IMR-90 (cell line): ENCODE measurements at regions of chr14 and their contacts with region 1.

Region 1: GRCh38 chr14:67166450-67166853 is 22.8 kb upstream of the GARIN2 start:
- DNase-seq: peak; percentile 58
- ATAC-seq: peak; percentile 66
- H3K4me3 ChIP-seq: no peak overlapping the region
- H3K27ac ChIP-seq: no peak overlapping the region
- H3K4me1 ChIP-seq: peaks cover 4% of the 10 kb centered on the region
- H3K27me3 ChIP-seq: no peaks in the 10 kb centered on the region
- CTCF ChIP-seq: peak; percentile 92
- POLR2A ChIP-seq: no peak
- RAD21 ChIP-seq: peak; percentile 93

Region 2: GRCh38 chr14:66790101-66790500 is 376.4 kb before region 1 on chr14:
- CTCF ChIA-PET with region 1: no interaction called
- POLR2A ChIA-PET with region 1: no interaction called
- dilution Hi-C with region 1: no loop called
- in situ Hi-C with region 1: no loop called
- intact Hi-C with region 1: no loop called
- DNase-seq: no peak
- ATAC-seq: no peak
- H3K4me3 ChIP-seq: no peak overlapping the region
- H3K27ac ChIP-seq: no peak overlapping the region
- H3K4me1 ChIP-seq: no peaks in the 10 kb centered on the region
- H3K27me3 ChIP-seq: no peaks in the 10 kb centered on the region
- CTCF ChIP-seq: no peak
- POLR2A ChIP-seq: no peak
- RAD21 ChIP-seq: no peak

Region 3: DNA sequence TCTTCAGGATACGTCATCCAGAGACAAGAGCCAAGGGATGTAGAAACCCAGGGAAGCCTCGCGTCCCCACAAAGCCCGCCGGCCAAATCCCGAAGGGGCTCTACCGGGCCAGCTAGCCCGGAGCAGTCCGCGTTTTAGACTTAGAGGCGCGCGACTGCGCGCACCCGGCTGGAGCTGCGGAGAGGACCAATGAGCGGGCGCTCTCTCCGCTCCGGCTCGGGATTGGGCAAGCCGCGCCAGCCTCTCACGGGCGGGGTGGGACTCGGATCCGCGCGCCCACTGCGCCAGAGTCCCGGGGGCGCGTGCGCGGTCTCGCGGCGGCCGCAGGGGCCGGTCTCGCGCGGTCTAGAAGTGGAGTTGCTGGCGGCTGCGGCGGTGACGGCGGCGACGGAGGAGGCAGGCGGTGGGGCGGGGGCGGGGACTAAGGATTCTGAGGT is 74.5 kb after region 1 on chr14:
- CTCF ChIA-PET with region 1: no interaction called
- POLR2A ChIA-PET with region 1: no interaction called
- dilution Hi-C with region 1: no loop called
- in situ Hi-C with region 1: no loop called
- intact Hi-C with region 1: loop called (anchors 2 kb)
- DNase-seq: peak; percentile 96
- ATAC-seq: peak; percentile 95
- H3K4me3 ChIP-seq: peak overlapping the region; percentile 83
- H3K27ac ChIP-seq: peak overlapping the region; percentile 81; the same call in 1 of the 2 replicates
- H3K4me1 ChIP-seq: peaks cover 4% of the 10 kb centered on the region
- H3K27me3 ChIP-seq: no peaks in the 10 kb centered on the region
- CTCF ChIP-seq: no peak
- POLR2A ChIP-seq: no peak; the same call in 1 of the 2 replicates
- RAD21 ChIP-seq: no peak

Region 4: GRCh38 chr14:67276131-67276530 is 109.7 kb after region 1 on chr14:
- CTCF ChIA-PET with region 1: interaction called, 3 read pairs
- POLR2A ChIA-PET with region 1: no interaction called
- dilution Hi-C with region 1: no loop called
- in situ Hi-C with region 1: loop called (anchors 5 kb)
- intact Hi-C with region 1: no loop called
- DNase-seq: no peak
- ATAC-seq: no peak
- H3K4me3 ChIP-seq: no peak overlapping the region
- H3K27ac ChIP-seq: no peak overlapping the region
- H3K4me1 ChIP-seq: no peaks in the 10 kb centered on the region
- H3K27me3 ChIP-seq: no peaks in the 10 kb centered on the region
- CTCF ChIP-seq: no peak
- POLR2A ChIP-seq: no peak
- RAD21 ChIP-seq: no peak

Region 5: DNA sequence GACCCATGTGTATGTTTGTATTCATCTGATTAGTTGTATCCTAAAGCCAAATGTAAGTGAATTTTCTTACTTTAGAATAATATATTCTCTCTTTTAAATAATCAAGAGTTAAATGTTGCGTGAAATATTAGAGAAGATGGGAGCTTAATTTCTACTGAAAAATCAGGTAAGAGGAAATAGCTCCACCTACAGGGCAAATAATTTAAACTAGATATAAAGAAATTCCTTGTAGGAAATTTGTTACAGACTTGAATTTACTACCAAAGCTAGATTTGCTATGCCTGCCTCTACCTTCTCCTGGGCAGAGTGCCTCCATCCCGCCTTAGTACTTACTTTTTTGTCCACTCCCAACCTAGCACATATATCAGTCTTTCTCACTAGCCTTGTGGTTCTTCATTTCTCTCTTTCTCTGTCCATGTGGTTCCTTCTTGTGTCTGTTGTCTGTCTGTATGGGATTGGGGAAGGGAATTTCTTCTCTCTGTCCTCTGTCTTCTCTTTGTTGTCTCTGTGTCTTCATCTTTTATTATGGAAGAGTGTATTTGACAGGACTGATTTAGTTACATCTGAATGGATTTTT is 119.5 kb after region 1 on chr14:
- CTCF ChIA-PET with region 1: interaction called, 14 read pairs
- POLR2A ChIA-PET with region 1: no interaction called
- dilution Hi-C with region 1: no loop called
- in situ Hi-C with region 1: no loop called
- intact Hi-C with region 1: loop called (anchors 1 kb)
- DNase-seq: peak; percentile 64
- ATAC-seq: peak; percentile 24; the same call in 1 of the 2 replicates
- H3K4me3 ChIP-seq: no peak overlapping the region
- H3K27ac ChIP-seq: no peak overlapping the region
- H3K4me1 ChIP-seq: no peaks in the 10 kb centered on the region
- H3K27me3 ChIP-seq: no peaks in the 10 kb centered on the region
- CTCF ChIP-seq: peak; percentile 69
- POLR2A ChIP-seq: no peak
- RAD21 ChIP-seq: peak; percentile 65

Region 6: DNA sequence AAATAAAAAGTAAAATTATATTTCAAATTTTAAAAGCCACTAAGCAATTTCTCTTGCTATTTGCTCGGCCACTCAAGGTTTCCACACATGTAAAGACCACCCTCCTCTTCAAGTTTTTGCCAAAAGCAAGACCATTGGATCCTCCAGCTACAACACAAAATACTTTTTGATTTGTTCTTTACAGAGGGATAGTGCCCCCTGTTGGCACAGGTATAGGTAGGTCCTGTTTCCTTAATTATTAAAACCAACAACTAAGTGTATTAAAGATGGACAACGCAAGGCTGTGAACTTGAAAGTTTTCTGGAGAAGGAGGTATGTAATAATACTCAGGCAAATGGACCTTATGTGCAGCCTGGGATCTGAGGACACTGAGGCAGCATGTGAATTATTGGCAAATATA is 169.3 kb after region 1 on chr14:
- CTCF ChIA-PET with region 1: no interaction called
- POLR2A ChIA-PET with region 1: no interaction called
- dilution Hi-C with region 1: no loop called
- in situ Hi-C with region 1: no loop called
- intact Hi-C with region 1: loop called (anchors 5 kb)
- DNase-seq: peak; percentile 27
- ATAC-seq: no peak
- H3K4me3 ChIP-seq: no peak overlapping the region
- H3K27ac ChIP-seq: no peak overlapping the region
- H3K4me1 ChIP-seq: peaks cover 5% of the 10 kb centered on the region; the same call in 1 of the 2 replicates
- H3K27me3 ChIP-seq: no peaks in the 10 kb centered on the region
- CTCF ChIP-seq: peak; percentile 39
- POLR2A ChIP-seq: no peak
- RAD21 ChIP-seq: peak; percentile 9; the same call in 1 of the 2 replicates

Region 7: GRCh38 chr14:67359775-67360648 is 193.6 kb after region 1 on chr14 and contains the starts of genes ATP6V1D and EIF2S1:
- CTCF ChIA-PET with region 1: interaction called, 4 read pairs
- POLR2A ChIA-PET with region 1: no interaction called
- dilution Hi-C with region 1: no loop called
- in situ Hi-C with region 1: no loop called
- intact Hi-C with region 1: loop called (anchors 1 kb)
- DNase-seq: peak; percentile 99
- ATAC-seq: peak; percentile 97
- H3K4me3 ChIP-seq: peak within 1 kb of the TSS; percentile 96
- H3K27ac ChIP-seq: peak within 1 kb of the TSS; percentile 87
- H3K4me1 ChIP-seq: peaks cover 2% of the 10 kb centered on the region; the same call in 1 of the 2 replicates
- H3K27me3 ChIP-seq: no peaks in the 10 kb centered on the region
- CTCF ChIP-seq: peak; percentile 94
- POLR2A ChIP-seq: peak; percentile 79
- RAD21 ChIP-seq: peak; percentile 29
- total RNA-seq, gene ATP6V1D: 113 and 167 TPM in 2 replicates
- total RNA-seq, gene EIF2S1: 125 and 360 TPM in 2 replicates